ENCODE measurements at regions of chr2 and their contacts with region 1.

Region 1: DNA sequence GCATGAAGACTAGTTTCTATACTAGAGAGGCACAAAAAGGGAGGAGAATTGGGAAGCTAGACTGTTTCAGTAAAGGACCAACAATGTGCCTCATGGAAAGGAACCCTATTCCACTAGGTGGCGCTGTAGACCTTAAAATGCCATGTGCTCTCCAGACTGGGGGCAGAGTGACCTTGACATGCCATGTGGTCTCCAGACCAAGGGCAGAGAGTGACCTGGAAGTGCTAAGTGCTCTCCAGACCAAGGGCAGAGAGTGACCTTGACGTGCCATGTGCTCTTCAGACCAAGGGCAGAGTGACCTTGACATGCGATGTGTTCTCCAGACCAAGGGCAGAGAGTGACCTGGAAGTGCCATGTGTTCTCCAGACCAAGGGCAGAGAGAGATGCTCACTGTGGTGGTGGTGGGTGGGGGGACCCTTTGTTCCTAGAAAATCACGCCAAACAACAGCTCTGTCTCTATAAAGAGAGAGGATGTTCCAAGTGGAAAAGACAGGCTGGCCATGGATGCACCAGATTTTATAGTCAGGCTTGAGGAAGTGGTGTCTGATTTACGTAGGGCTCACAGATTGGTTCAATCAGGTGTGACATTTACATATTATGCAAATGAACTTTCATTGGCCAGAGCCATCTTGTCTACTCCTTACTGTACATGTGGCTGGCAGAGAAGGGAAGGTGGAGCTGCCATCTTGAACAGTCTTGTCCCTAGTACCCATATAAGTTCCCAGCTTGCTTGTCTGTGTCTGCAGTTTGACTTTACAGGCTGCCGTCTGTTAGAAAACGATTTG is 344.0 kb upstream of the DDX18 start:
- DNase-seq: peak; percentile 41 to 76
- H3K4me3 ChIP-seq: no peak overlapping the region
- H3K27ac ChIP-seq: no peak overlapping the region
- H3K4me1 ChIP-seq: peaks cover 1 to 5% (median 3%) of the 10 kb centered on the region in 4 experiments; a peak in 1 of 7 replicates
- H3K27me3 ChIP-seq: no peaks in the 10 kb centered on the region
- CTCF ChIP-seq: peak; percentile 42 to 91 (median 87)
- EP300 ChIP-seq: no peak
- POLR2A ChIP-seq: no peak
- RAD21 ChIP-seq: peak; percentile 97 to 98

Region 2: DNA sequence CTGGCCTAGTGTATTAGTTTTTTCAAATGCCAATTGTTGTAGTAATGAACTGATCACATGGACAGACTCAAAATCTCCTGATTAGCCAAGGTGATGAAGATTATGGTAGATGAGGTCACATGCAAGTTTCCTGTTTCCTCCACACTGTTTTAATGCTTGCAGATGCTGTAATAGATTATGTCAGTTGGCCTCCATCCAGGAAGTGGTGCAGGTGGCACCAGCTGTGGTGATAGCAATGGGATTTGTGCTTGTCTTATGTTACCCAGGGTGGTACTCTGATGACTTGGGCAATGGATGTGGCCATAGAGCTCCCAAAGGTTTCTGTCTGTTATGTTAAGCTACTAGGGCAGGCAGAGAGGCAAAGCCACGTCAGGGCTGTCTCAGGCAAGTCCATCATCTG is 11.1 kb after region 1 on chr2:
- CTCF ChIA-PET with region 1: interaction called, 23 read pairs
- POLR2A ChIA-PET with region 1: no interaction called
- DNase-seq: no peak
- H3K4me3 ChIP-seq: no peak overlapping the region
- H3K27ac ChIP-seq: no peak overlapping the region
- H3K4me1 ChIP-seq: peaks cover 3 to 6% (median 4%) of the 10 kb centered on the region in 4 experiments; a peak in 6 of 7 replicates
- H3K27me3 ChIP-seq: no peaks in the 10 kb centered on the region
- CTCF ChIP-seq: no peak
- EP300 ChIP-seq: no peak
- POLR2A ChIP-seq: no peak
- RAD21 ChIP-seq: no peak

Region 3: DNA sequence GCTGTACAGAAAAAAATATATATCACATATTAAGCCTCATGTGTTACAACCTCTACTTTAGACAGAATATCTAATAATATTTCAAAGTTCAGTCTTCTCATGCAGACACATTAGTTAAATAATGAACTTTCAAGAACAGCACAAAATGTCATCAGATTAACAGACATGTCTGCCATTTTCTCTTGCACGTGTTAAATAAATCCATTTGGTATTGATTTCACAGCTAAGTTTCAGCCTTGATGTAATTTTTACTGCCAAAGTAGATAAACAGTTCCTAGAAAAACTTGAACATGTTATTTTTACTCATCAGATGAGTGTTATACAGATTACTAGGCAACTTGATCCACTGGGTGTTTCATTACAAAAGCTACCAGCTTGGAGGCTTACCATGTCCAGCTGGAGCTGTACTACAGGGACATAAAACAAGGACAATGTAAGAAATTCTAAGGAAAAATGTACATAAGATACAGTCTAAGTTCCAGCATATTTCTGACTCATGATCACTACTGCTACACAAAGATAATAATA is 53.3 kb after region 1 on chr2:
- CTCF ChIA-PET with region 1: no interaction called
- POLR2A ChIA-PET with region 1: no interaction called
- DNase-seq: no peak
- H3K4me3 ChIP-seq: no peak overlapping the region
- H3K27ac ChIP-seq: no peak overlapping the region
- H3K4me1 ChIP-seq: no peaks in the 10 kb centered on the region; a peak in 1 of 7 replicates
- H3K27me3 ChIP-seq: no peaks in the 10 kb centered on the region
- CTCF ChIP-seq: no peak
- EP300 ChIP-seq: no peak
- POLR2A ChIP-seq: no peak
- RAD21 ChIP-seq: no peak

Region 4: GRCh38 chr2:117551858-117552257 is 81.4 kb after region 1 on chr2:
- CTCF ChIA-PET with region 1: interaction called, 11 read pairs
- POLR2A ChIA-PET with region 1: no interaction called
- DNase-seq: no peak
- H3K4me3 ChIP-seq: no peak overlapping the region
- H3K27ac ChIP-seq: no peak overlapping the region
- H3K4me1 ChIP-seq: peaks cover 0 to 18% (median 10%) of the 10 kb centered on the region in 4 experiments; a peak in 5 of 7 replicates
- H3K27me3 ChIP-seq: no peaks in the 10 kb centered on the region
- CTCF ChIP-seq: no peak
- EP300 ChIP-seq: no peak
- POLR2A ChIP-seq: no peak
- RAD21 ChIP-seq: no peak

Region 5: DNA sequence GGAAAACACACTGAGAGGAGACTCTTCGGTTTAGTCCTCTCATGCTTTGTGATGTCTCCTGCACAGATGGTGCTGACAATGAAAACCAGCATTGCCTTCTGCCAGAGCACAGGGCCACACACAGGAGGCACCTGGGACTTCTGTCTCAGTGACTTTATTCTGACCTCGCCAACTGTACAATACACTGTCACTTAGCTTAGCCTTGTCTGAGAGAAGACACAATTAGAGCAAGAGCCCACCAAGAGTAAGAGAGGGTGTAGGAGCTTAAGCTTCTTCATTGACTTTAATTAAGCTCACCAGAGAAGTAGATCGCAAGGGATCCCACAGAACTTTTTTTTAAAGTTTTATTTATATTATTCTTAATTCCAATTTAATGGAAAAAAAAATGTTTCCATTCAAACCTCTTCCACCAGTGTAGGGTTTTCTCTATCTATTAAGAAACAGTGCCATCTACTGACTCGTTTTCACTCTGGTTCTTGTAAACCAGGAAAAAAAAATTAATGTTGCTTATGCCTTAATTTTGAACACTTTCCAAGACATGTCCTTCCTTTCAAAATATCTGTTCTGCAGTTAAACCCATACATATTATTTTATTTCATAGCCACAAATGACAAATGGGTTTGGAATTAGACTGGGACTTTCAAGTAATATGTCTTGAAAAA is 301.6 kb after region 1 on chr2:
- CTCF ChIA-PET with region 1: interaction called, 12 read pairs
- POLR2A ChIA-PET with region 1: no interaction called
- DNase-seq: no peak
- H3K4me3 ChIP-seq: no peak overlapping the region
- H3K27ac ChIP-seq: no peak overlapping the region
- H3K4me1 ChIP-seq: 0 out of 7 replicates have a peak, but pooled peaks cover 0 to 4% (median 0%) of the 10 kb centered on the region in 4 experiments
- H3K27me3 ChIP-seq: no peaks in the 10 kb centered on the region
- CTCF ChIP-seq: peak in 2 of 3 experiments; percentile 19 to 27; a peak in 2 of 4 replicates
- EP300 ChIP-seq: no peak
- POLR2A ChIP-seq: no peak
- RAD21 ChIP-seq: peak in 1 of 2 experiments; percentile 66

Region 6: GRCh38 chr2:117785740-117786139 is 315.2 kb after region 1 on chr2:
- CTCF ChIA-PET with region 1: interaction called, 23 read pairs
- POLR2A ChIA-PET with region 1: no interaction called
- DNase-seq: no peak
- H3K4me3 ChIP-seq: no peak overlapping the region
- H3K27ac ChIP-seq: no peak overlapping the region
- H3K4me1 ChIP-seq: no peaks in the 10 kb centered on the region
- H3K27me3 ChIP-seq: no peaks in the 10 kb centered on the region
- CTCF ChIP-seq: peak in 2 of 3 experiments; percentile 56 to 58; a peak in 3 of 4 replicates
- EP300 ChIP-seq: no peak
- POLR2A ChIP-seq: no peak
- RAD21 ChIP-seq: peak; percentile 70 to 76

Measured in H1 (cell line).